ENCODE measurements at regions of chr2 and their contacts with region 1.

Region 1: DNA sequence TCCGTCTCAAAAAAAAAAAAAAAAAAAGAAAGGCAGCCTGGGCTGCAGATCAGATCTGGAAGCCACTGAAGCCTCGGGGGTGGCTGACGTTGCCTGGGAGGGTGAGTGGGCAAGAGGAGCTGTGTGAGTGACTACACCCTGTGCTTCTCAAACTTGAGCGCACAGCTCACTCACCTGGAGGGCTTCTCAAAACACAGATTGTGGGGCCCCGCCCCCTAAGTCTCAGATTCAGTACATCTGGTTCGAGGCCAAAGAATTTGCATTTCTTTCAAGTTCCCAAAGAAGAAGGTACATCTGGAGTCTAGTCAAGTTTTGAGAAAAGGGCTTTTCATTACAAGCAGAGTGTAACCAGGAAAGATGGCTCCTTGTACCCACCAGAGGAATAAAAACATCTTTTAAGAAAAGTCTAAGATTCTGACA is 97.7 kb upstream of the CAB39 start:
- DNase-seq: no peak
- H3K4me3 ChIP-seq: no peak overlapping the region
- H3K27ac ChIP-seq: no peak overlapping the region
- H3K4me1 ChIP-seq: no peaks in the 10 kb centered on the region
- H3K27me3 ChIP-seq: no peaks in the 10 kb centered on the region
- CTCF ChIP-seq: no peak
- POLR2A ChIP-seq: no peak

Region 2: DNA sequence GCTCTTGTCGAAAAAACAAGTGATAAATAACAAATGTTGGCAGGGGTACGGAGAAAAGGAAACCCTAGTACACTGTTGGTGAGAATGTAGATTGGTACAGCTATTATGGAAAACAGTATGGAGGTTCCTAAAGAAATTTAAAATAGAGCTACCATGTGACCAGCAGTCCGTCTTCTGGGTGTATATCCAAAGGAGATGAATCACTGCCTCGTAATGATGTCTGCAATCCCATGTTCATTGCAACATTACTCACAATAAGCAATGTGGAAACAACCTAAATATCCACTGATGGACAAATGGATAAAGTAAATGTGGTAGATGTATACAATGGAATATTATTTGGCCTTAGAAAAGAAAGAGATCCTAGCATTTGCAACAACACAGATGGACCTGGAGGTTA is 596.8 kb before region 1 on chr2:
- intact Hi-C with region 1: loop called (anchors 10 kb)
- DNase-seq: no peak
- H3K4me3 ChIP-seq: no peak overlapping the region
- H3K27ac ChIP-seq: no peak overlapping the region
- H3K4me1 ChIP-seq: no peaks in the 10 kb centered on the region
- H3K27me3 ChIP-seq: no peaks in the 10 kb centered on the region
- CTCF ChIP-seq: no peak
- POLR2A ChIP-seq: no peak

Measured in vagina (tissue), 2 donors.